ENCODE measurements at regions of chr10 and their contacts with region 1.

Region 1: DNA sequence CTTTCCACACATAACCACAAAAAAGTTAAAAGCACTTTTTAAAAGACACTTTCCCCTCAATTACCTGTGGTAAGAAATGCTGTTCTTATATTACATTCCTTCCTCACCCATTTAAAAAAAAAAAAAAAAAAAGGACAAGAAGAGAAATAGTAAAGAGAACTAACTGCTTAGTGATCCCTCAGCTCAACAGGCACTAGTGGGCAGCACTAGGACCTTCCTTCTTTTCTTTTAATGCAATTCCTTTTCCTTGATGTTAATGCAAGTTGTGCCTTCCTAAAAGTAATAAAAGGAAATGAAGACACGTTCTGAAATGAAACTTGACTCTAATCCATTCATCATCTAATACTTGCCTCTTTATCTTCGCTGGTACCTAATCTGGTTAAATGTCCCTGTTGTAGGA is 189.7 kb downstream of the TCF7L2 start:
- DNase-seq: no peak

Region 2: GRCh38 chr10:113379091-113379490 is 239.4 kb after region 1 on chr10:
- intact Hi-C with region 1: loop called (anchors 5 to 10 kb)
- DNase-seq: no peak

Region 3: DNA sequence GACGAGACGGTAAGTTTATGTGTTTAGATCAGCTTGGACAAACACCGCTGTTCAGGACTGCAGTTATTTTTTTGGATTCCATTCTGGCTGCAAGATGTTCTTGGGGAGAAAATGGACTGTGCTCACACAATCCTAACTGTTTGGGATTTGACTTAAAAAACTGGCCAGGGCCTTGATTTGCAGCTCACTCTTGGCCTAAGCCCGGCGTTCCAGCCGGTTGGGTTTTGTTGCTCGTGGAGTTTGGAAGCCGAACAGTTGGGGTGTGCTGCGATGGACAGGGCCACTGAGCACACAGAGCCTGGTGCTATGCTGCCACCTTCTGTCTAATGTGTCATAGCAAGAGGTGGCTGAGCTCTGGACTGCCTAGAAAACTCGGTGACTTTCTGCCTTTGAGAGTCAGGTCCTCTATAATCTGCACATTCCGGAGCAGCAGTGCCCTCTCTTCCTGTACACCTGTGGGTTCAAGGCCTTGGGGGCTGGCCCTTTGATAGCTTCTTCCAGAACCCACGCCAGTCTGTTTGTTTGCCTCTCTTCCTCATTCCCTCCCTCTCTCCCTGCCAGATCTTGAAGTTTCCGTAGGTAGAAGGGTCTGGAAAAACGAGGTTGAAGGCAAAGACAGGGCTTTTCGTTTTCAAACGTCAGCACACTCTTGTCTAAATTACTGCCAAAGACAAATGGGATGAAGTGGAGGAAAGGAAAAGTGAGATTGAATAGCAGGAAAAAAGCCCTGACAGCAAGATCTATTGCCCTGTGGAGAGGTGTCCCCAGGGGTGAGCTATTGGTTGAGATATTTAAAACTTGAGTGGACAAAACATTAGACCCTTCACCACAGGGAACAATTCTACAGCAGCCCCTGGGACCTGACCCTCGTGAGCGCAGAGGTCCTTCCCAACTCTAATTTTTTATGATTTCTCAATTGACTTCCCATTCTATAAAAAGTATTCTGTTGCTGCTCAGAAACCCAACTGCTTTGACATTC is 245.6 kb after region 1 on chr10:
- intact Hi-C with region 1: loop called in 1 of 2 experiments (anchors 10 kb)
- DNase-seq: peak; percentile 95

Measured in posterior vena cava (tissue), 2 donors.